GM12878 (cell line): ENCODE measurements at regions of chr3 and their contacts with region 1.

Region 1: DNA sequence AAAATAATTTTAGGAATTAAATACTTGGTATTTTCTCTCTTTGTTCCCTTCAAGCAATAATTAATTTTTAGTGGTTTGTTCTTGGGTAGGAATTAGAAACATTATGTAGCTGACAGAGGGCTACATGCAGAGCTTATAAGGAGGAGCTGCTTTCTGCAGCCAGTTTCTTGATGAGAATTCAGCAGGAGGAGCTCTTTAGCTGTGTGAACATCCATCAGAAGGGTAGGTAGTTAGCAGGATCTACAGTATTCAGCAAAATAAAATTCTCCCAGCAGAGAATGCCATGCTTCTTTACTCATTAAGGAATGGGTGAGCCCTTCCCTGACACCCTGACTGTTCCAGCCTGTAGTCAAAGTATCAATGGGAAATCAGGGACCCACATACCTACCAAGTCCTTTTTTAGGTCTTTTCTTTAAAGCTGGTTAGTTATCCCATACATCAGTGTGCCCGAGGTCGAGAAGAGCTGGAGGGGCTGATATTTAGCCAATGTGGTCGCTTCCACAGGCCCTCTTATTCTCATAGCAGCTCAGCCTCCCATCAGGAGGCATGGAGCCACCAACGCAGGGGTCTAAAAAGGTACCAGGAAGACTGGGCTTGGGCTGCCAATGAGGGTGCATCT is 54.0 kb downstream of the KCNAB1 start:
- DNase-seq: no peak
- ATAC-seq: no peak
- H3K4me3 ChIP-seq: no peak overlapping the region
- H3K27ac ChIP-seq: no peak overlapping the region
- H3K4me1 ChIP-seq: no peaks in the 10 kb centered on the region
- H3K27me3 ChIP-seq: no peaks in the 10 kb centered on the region; a peak in 1 of 4 replicates
- CTCF ChIP-seq: peak in 2 of 3 experiments; percentile 7 to 13; a peak in 2 of 6 replicates
- EP300 ChIP-seq: no peak
- POLR2A ChIP-seq: no peak
- RAD21 ChIP-seq: peak; percentile 27; the same call in 1 of the 2 replicates

Region 2: GRCh38 chr3:154660811-154661210 is 1513.5 kb before region 1 on chr3:
- CTCF ChIA-PET with region 1: no interaction called
- POLR2A ChIA-PET with region 1: no interaction called
- RAD21 ChIA-PET with region 1: no interaction called
- SMC1A ChIA-PET with region 1: no interaction called
- in situ Hi-C with region 1: no loop called
- intact Hi-C with region 1: loop called (anchors 10 kb)
- DNase-seq: no peak
- ATAC-seq: no peak
- H3K4me3 ChIP-seq: no peak overlapping the region
- H3K27ac ChIP-seq: no peak overlapping the region
- H3K4me1 ChIP-seq: no peaks in the 10 kb centered on the region
- H3K27me3 ChIP-seq: no peaks in the 10 kb centered on the region
- CTCF ChIP-seq: no peak
- EP300 ChIP-seq: no peak
- POLR2A ChIP-seq: no peak
- RAD21 ChIP-seq: no peak

Region 3: GRCh38 chr3:156142702-156143101 is 31.6 kb before region 1 on chr3:
- CTCF ChIA-PET with region 1: no interaction called
- POLR2A ChIA-PET with region 1: no interaction called
- RAD21 ChIA-PET with region 1: no interaction called
- SMC1A ChIA-PET with region 1: no interaction called
- in situ Hi-C with region 1: no loop called
- intact Hi-C with region 1: no loop called
- DNase-seq: no peak
- ATAC-seq: no peak
- H3K4me3 ChIP-seq: no peak overlapping the region
- H3K27ac ChIP-seq: no peak overlapping the region
- H3K4me1 ChIP-seq: no peaks in the 10 kb centered on the region
- H3K27me3 ChIP-seq: no peaks in the 10 kb centered on the region
- CTCF ChIP-seq: no peak
- EP300 ChIP-seq: no peak
- POLR2A ChIP-seq: no peak
- RAD21 ChIP-seq: no peak